IMR-90 (cell line): ENCODE measurements at regions of chrX and their contacts with region 1.

Region 1: DNA sequence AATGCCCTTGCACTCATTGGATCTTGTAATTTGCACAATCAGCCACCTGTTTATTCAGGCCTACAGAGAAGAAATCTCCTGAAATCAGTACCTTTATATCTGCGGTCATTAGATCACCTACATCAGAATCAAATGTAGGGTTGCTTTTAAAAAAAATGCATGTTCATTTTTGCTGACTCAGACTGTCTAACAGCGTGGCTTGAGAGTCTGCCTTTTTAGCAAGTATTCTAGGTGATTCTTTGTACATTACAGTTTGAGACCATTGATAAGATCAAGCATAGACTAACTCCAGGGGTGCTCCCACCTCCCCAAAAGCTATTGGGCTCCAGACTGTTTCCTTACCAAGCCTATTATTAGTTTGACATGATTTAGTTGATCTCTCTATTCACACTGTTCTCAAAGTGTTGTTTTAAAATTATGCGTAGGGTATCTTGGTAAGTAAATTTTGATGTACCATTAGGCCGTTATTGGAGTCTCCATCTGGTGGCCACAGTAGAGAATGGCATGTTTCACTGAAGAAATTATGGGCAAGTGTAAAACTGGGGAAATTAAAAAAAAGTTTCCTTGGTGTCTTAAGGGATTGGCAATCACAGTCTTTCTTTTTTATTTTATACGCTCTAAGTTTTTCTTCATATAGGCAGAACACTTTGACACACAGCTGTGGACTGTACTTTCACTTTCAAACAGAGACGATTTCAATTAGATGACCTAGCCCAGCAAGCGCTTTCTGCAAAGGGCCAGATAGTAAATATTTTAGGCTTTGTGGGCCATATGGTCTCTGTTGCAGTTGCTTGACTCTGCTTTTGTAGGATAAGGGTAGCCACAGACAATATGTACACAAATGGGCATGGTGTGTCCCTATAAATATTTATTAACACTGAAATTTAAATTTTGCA is 33.7 kb upstream of the MSL3 start:
- DNase-seq: peak; percentile 41
- ATAC-seq: peak; percentile 70
- H3K4me3 ChIP-seq: no peak overlapping the region
- H3K27ac ChIP-seq: no peak overlapping the region
- H3K4me1 ChIP-seq: no peaks in the 10 kb centered on the region
- H3K27me3 ChIP-seq: no peaks in the 10 kb centered on the region
- CTCF ChIP-seq: peak; percentile 78
- POLR2A ChIP-seq: no peak
- RAD21 ChIP-seq: peak; percentile 53

Region 2: DNA sequence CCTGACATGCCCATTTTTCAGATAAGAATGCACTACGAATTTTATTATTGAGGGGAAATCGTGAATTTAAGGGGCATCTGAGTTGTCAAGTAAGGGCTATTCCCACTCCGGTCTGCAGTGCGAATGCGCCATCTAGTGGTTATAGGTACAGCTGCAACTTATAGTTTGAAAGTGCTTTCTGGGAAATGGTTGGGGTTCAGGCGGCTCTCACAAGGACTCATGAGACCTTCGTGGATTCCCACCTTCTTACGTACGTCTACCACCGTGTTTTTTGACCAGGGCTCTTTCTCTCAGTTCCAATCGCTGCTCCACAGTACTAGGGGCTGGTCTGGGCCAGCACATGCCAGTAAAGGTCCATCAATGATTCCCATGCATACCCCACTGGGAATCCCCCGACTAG is 46.0 kb after region 1 on chrX:
- CTCF ChIA-PET with region 1: no interaction called
- POLR2A ChIA-PET with region 1: no interaction called
- dilution Hi-C with region 1: no loop called
- in situ Hi-C with region 1: no loop called
- intact Hi-C with region 1: loop called (anchors 5 kb)
- DNase-seq: peak; percentile 63
- ATAC-seq: peak; percentile 90
- H3K4me3 ChIP-seq: no peak overlapping the region
- H3K27ac ChIP-seq: no peak overlapping the region
- H3K4me1 ChIP-seq: no peaks in the 10 kb centered on the region
- H3K27me3 ChIP-seq: no peaks in the 10 kb centered on the region
- CTCF ChIP-seq: peak; percentile 89
- POLR2A ChIP-seq: no peak
- RAD21 ChIP-seq: peak; percentile 79

Region 3: GRCh38 chrX:11970578-11971359 is 246.4 kb after region 1 on chrX:
- CTCF ChIA-PET with region 1: no interaction called
- POLR2A ChIA-PET with region 1: no interaction called
- dilution Hi-C with region 1: no loop called
- in situ Hi-C with region 1: no loop called
- intact Hi-C with region 1: no loop called
- DNase-seq: peak; percentile 17
- ATAC-seq: no peak
- H3K4me3 ChIP-seq: no peak overlapping the region
- H3K27ac ChIP-seq: no peak overlapping the region
- H3K4me1 ChIP-seq: peaks cover 6% of the 10 kb centered on the region; the same call in 1 of the 2 replicates
- H3K27me3 ChIP-seq: no peaks in the 10 kb centered on the region
- CTCF ChIP-seq: no peak
- POLR2A ChIP-seq: no peak
- RAD21 ChIP-seq: no peak